Dorsolateral prefrontal cortex (tissue), 120 donors: ENCODE measurements at regions of chr20 and their contacts with region 1.

Region 1: DNA sequence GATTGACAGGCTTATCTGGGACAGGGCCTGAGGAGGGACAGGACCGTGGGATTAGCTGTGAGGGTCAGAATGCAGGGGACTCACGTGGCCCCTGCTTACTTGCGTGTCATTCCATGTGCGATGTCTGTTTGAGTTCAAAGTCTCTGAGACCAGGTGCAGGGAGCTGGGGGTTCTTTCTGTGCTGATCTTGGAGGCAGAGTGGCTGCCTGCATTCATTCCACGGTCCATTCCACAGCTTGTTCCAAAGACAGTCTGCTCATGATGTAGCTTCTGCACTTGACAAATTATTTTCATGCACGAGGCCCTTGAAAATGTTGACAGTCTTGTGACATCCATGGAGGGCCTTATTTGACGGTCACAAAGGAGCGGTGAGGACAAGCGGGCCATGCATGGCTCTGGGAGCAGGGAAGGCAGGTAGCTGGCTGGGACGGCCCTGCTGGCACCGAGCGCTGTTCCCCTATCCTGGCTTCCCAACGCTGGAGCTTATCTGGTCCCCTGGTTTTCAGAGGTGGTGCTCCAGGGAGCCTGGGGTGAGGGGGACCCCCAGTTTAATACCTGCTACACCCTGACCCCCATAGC is 156.3 kb upstream of the RNF24 start:
- DNase-seq: peak in 1 of 10 donors; percentile 42
- H3K4me3 ChIP-seq: peak overlapping the region; percentile 47 to 84 (median 72)
- H3K27ac ChIP-seq: peak overlapping the region; percentile 66 to 98 (median 95)
- H3K27me3 ChIP-seq: no peaks in the 10 kb centered on the region
- CTCF ChIP-seq: peak in 1 of 56 donors; percentile 5

Region 2: DNA sequence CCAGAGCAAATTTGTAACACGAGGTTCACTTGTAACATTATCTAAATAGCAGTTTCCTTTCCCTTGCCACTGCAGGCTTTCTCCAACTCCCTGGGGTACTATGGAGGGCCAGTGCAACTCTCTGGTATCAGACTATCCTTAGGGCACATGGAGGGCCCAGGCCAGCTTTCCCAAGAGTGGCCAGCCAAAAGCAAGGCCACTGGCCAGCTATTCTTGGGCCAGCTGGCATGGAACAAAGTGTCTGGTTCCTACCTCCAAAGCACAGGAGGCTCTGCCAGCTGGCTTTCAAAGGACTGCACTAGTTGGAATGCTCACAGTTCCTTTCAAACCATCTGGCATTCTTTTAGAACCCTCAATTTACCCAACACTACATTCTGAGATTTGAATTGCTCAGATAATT is 165.0 kb before region 1 on chr20:
- intact Hi-C with region 1: no loop called
- DNase-seq: peak in 9 of 10 donors; percentile 48 to 93 (median 61)
- H3K4me3 ChIP-seq: no peak overlapping the region
- H3K27ac ChIP-seq: peak overlapping the region in 17 of 59 donors; percentile 1 to 62 (median 30)
- H3K27me3 ChIP-seq: no peaks in the 10 kb centered on the region
- CTCF ChIP-seq: no peak

Region 3: GRCh38 chr20:4108495-4109306 is 62.9 kb before region 1 on chr20:
- intact Hi-C with region 1: loop called in 1 of 2 experiments (anchors 1 kb)
- DNase-seq: peak in 9 of 10 donors; percentile 50 to 80 (median 72)
- H3K4me3 ChIP-seq: peak overlapping the region in 3 of 59 donors; percentile 9 to 31 (median 30)
- H3K27ac ChIP-seq: peak overlapping the region in 2 of 59 donors; percentile 7 to 13
- H3K27me3 ChIP-seq: no peaks in the 10 kb centered on the region
- CTCF ChIP-seq: peak; percentile 76 to 99 (median 95)

Region 4: DNA sequence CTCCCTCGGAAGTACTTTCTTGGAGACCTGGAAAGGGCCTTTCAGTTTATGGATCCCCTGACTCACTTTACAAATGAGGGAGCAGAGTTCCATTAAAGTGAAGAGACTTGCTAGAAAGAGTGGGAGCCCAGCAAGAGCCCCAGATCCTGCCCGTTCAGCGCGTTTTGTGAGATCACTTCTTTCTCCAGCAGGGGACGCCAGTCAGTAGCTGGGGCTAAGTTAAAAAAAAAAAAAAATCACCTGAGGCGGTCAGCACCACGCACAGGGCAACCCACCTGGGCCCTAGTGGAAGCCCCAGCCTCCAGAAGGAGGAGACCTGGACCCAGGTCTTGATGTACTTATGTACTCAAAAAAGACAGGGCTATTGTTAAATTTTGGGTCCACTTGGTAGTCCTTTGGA is 118.2 kb after region 1 on chr20:
- intact Hi-C with region 1: no loop called
- DNase-seq: no peak
- H3K4me3 ChIP-seq: no peak overlapping the region
- H3K27ac ChIP-seq: no peak overlapping the region
- H3K27me3 ChIP-seq: no peaks in the 10 kb centered on the region
- CTCF ChIP-seq: no peak

Region 5: DNA sequence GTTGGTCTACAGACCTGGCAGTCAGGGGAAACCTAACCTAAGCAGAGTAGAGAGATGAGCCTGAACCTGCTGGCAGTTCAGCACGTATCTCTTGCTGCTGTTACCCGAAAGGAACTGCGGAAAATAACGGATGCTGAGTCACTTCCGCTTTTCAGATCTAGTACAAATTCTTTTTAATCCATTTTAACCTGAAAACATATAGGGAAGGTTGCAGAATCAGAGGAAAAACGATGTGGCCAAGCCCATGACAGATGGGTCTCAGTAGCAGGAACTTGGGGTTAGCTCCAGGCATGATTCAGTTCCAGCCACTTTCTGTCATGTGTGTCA is 198.1 kb after region 1 on chr20:
- intact Hi-C with region 1: no loop called
- DNase-seq: no peak
- H3K4me3 ChIP-seq: no peak overlapping the region
- H3K27ac ChIP-seq: no peak overlapping the region
- H3K27me3 ChIP-seq: no peaks in the 10 kb centered on the region
- CTCF ChIP-seq: no peak